ENCODE measurements at regions of chr9 and their contacts with region 1.

Region 1: DNA sequence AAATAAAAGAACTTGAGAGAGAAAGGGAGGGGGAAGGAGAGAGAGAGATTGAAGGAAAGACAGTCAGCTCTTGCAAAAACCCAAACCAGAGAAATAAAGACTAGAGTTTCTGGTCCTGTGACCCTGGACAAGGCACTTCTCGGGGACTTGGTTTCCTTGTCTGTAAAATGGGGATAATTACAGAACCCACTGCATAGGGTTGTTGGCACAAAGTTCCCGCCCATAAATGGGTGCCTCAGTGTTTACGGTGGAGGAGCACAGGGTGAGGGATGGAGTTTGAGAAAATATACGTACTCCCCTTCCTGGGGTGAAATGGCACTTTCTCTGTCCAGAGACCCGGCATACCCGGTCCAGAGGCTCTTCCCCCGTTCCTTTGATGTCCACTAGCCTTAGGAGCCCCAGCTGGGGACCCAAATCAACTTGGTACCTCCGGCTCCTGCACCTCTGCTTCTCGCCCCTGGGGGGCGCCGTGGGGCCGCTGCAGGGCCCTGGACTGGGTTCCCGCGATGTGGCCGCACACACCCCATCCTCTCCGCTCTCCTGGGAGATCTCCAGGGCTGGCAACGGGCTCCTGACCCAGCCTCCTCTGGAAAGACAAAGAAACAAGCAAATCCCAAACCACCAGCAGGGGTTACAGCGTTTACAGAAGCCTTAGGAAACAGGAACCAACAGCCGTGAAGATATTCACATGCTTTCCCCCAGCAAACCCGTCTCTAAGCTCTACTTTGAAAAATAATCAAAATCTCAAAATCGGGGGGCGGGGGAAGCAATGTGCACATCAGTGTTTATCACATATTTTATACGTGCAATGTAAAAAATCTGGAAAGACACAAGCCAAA is 26.3 kb downstream of the PTGES start:
- DNase-seq: peak; percentile 81
- ATAC-seq: peak; percentile 99
- H3K4me3 Mint-ChIP-seq: peak overlapping the region; percentile 33
- H3K27ac Mint-ChIP-seq: no peak overlapping the region
- H3K4me1 Mint-ChIP-seq: peaks cover 2% of the 10 kb centered on the region
- H3K27me3 Mint-ChIP-seq: no peaks in the 10 kb centered on the region

Region 2: GRCh38 chr9:129712634-129713401 is 13.7 kb before region 1 on chr9:
- CTCF ChIA-PET with region 1: interaction called, 28 read pairs
- POLR2A ChIA-PET with region 1: no interaction called
- intact Hi-C with region 1: no loop called
- DNase-seq: no peak
- ATAC-seq: no peak
- H3K4me3 Mint-ChIP-seq: no peak overlapping the region
- H3K27ac Mint-ChIP-seq: no peak overlapping the region
- H3K4me1 Mint-ChIP-seq: peaks cover 17% of the 10 kb centered on the region
- H3K27me3 Mint-ChIP-seq: peaks cover 5% of the 10 kb centered on the region

Region 3: GRCh38 chr9:129737479-129738274 is 11.1 kb after region 1 on chr9:
- CTCF ChIA-PET with region 1: interaction called, 40 read pairs
- POLR2A ChIA-PET with region 1: interaction called, 4 read pairs
- intact Hi-C with region 1: no loop called
- DNase-seq: peak; percentile 93
- ATAC-seq: peak; percentile 89
- H3K4me3 Mint-ChIP-seq: peak overlapping the region; percentile 55
- H3K27ac Mint-ChIP-seq: no peak overlapping the region
- H3K4me1 Mint-ChIP-seq: peaks cover 6% of the 10 kb centered on the region
- H3K27me3 Mint-ChIP-seq: no peaks in the 10 kb centered on the region

Region 4: GRCh38 chr9:129783516-129784361 is 57.2 kb after region 1 on chr9:
- CTCF ChIA-PET with region 1: interaction called, 65 read pairs
- POLR2A ChIA-PET with region 1: no interaction called
- intact Hi-C with region 1: loop called in 1 of 2 experiments (anchors 1 kb)
- DNase-seq: peak; percentile 84
- ATAC-seq: peak; percentile 100
- H3K4me3 Mint-ChIP-seq: no peak overlapping the region
- H3K27ac Mint-ChIP-seq: peak overlapping the region; percentile 11
- H3K4me1 Mint-ChIP-seq: peaks cover 4% of the 10 kb centered on the region
- H3K27me3 Mint-ChIP-seq: peaks cover 2% of the 10 kb centered on the region

Region 5: GRCh38 chr9:129796029-129796910 is 69.7 kb after region 1 on chr9:
- CTCF ChIA-PET with region 1: interaction called, 21 read pairs
- POLR2A ChIA-PET with region 1: interaction called, 5 read pairs
- intact Hi-C with region 1: no loop called
- DNase-seq: no peak
- ATAC-seq: no peak
- H3K4me3 Mint-ChIP-seq: no peak overlapping the region
- H3K27ac Mint-ChIP-seq: no peak overlapping the region
- H3K4me1 Mint-ChIP-seq: no peaks in the 10 kb centered on the region
- H3K27me3 Mint-ChIP-seq: no peaks in the 10 kb centered on the region

Measured in activated CD4-positive, alpha-beta T cell treated with anti-CD3 and anti-CD28 coated beads for 36 hours (primary cell).